ENCODE measurements at regions of chr19 and their contacts with region 1.

Region 1: GRCh38 chr19:33235269-33235995 is 9.8 kb upstream of the SLC7A10 start:
- DNase-seq: peak; percentile 77
- H3K4me3 ChIP-seq: no peak overlapping the region
- H3K27ac ChIP-seq: no peak overlapping the region
- H3K4me1 ChIP-seq: no peaks in the 10 kb centered on the region
- H3K27me3 ChIP-seq: peaks cover under 1% of the 10 kb centered on the region; the same call in 1 of the 2 replicates

Region 2: DNA sequence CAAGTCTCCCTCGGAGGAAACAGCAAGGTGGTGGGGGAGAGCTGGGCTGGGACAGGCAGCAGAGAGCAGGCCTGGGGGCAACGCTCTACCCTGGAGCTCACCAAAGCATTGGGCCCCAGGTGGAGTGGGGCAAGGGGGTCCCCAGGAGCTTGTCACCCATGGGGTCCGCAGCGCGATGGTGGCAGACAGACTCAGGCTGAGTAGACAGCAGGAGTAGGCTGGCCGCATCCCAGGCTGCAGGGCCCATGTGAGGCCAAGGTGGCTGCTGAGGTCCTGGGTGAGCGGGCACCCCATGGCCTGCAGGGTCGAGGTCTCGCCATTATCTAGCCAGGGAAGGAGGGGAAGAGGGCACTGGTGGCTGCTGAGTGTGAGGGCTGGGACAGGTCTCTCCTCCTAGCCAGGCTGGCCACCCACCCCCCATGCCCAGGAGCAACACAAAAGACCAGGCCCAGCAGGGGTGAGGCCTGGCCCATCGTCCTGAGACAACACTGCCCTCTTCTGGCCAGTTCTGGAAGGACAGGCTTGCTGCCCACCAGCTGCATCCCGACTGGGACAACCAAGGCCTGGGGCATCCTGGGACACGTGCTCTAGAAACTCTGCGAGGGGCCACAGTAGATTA is 171.2 kb after region 1 on chr19:
- in situ Hi-C with region 1: loop called (anchors 5 kb)
- DNase-seq: peak; percentile 55
- H3K4me3 ChIP-seq: no peak overlapping the region
- H3K27ac ChIP-seq: no peak overlapping the region
- H3K4me1 ChIP-seq: no peaks in the 10 kb centered on the region
- H3K27me3 ChIP-seq: no peaks in the 10 kb centered on the region

Region 3: GRCh38 chr19:33771384-33772101 is 536.1 kb after region 1 on chr19:
- in situ Hi-C with region 1: loop called (anchors 10 kb)
- DNase-seq: peak; percentile 73
- H3K4me3 ChIP-seq: no peak overlapping the region
- H3K27ac ChIP-seq: no peak overlapping the region
- H3K4me1 ChIP-seq: no peaks in the 10 kb centered on the region
- H3K27me3 ChIP-seq: 0 out of 2 replicates have a peak, but pooled peaks cover 10% of the 10 kb centered on the region

Measured in GM23248 (cell line).